B cell (primary cell): ENCODE measurements at regions of chr3 and their contacts with region 1.

Region 1: DNA sequence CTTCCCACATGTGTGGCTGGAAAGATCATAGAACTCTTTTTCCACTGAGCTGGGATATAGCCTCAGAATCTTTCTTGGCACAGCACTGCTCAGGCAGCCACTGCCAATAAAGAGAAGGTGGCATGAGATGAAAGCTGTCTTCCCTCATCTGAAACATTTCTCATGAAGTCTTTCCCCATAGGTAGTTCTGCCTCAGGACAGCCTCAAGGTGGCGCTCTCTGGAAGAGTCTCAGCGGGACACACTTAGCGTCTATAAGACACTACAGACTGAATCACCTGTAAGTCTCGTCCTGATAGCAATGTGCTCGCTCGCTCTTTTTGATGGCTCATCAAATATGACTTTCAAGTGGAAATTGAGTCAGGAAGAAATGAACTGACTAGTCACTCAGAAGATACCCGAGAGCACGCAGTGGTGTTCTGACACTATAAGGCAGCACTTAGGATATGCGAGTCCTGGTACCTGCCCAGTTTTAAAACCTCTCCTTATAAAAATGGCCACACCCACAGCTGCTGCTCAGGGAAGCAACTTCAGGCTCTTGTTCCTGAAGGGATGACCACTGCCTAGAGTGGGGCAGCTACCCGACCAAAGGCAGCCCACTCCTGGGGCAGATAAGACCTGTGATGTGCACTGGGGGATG is 269.5 kb downstream of the SUCLG2 start:
- DNase-seq: peak; percentile 29
- ATAC-seq: no peak
- H3K4me3 ChIP-seq: no peak overlapping the region
- H3K4me3 Mint-ChIP-seq: no peak overlapping the region
- H3K27ac ChIP-seq: no peak overlapping the region
- H3K27ac Mint-ChIP-seq: no peak overlapping the region
- H3K4me1 ChIP-seq: peaks cover 2% of the 10 kb centered on the region in 2 donors
- H3K4me1 Mint-ChIP-seq: peaks cover 7% of the 10 kb centered on the region
- H3K27me3 ChIP-seq: no peaks in the 10 kb centered on the region
- H3K27me3 Mint-ChIP-seq: no peaks in the 10 kb centered on the region
- CTCF ChIP-seq: peak; percentile 57

Region 2: DNA sequence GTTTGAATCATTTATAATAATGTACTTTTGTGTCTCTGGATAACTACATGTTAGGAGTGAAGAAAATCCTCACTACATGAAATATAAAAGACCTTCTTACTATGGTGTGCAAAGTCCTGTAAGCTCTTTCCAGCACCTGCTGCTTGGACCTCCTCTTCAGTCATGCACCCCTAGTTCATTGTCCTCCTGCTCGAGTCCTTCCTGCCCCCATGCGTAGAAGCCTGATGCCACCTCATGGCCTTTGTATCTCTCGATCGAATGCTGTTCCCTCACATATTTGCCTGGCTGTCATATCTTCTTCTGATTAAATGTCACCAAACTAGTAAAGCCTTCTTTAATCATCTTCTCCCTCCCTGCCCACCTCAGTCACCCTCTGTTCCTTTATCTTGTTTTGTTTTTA is 319.4 kb after region 1 on chr3:
- CTCF ChIA-PET with region 1: interaction called, 5 read pairs
- POLR2A ChIA-PET with region 1: no interaction called
- intact Hi-C with region 1: loop called (anchors 5 kb)
- DNase-seq: peak; percentile 30
- ATAC-seq: no peak
- H3K4me3 ChIP-seq: no peak overlapping the region
- H3K4me3 Mint-ChIP-seq: no peak overlapping the region
- H3K27ac ChIP-seq: no peak overlapping the region
- H3K27ac Mint-ChIP-seq: no peak overlapping the region
- H3K4me1 ChIP-seq: peaks cover 6% of the 10 kb centered on the region in 2 donors
- H3K4me1 Mint-ChIP-seq: peaks cover 8% of the 10 kb centered on the region
- H3K27me3 ChIP-seq: no peaks in the 10 kb centered on the region
- H3K27me3 Mint-ChIP-seq: no peaks in the 10 kb centered on the region
- CTCF ChIP-seq: no peak

Region 3: GRCh38 chr3:67790043-67790442 is 405.2 kb after region 1 on chr3:
- CTCF ChIA-PET with region 1: interaction called, 92 read pairs
- POLR2A ChIA-PET with region 1: no interaction called
- intact Hi-C with region 1: loop called (anchors 1 kb)
- DNase-seq: peak; percentile 60
- ATAC-seq: peak; percentile 58
- H3K4me3 ChIP-seq: no peak overlapping the region
- H3K4me3 Mint-ChIP-seq: no peak overlapping the region
- H3K27ac ChIP-seq: no peak overlapping the region
- H3K27ac Mint-ChIP-seq: no peak overlapping the region
- H3K4me1 ChIP-seq: no peaks in the 10 kb centered on the region
- H3K4me1 Mint-ChIP-seq: no peaks in the 10 kb centered on the region
- H3K27me3 ChIP-seq: no peaks in the 10 kb centered on the region
- H3K27me3 Mint-ChIP-seq: peaks cover 6% of the 10 kb centered on the region
- CTCF ChIP-seq: peak; percentile 73

Region 4: GRCh38 chr3:68017067-68017466 is 632.2 kb after region 1 on chr3:
- CTCF ChIA-PET with region 1: no interaction called
- POLR2A ChIA-PET with region 1: no interaction called
- intact Hi-C with region 1: loop called (anchors 10 kb)
- DNase-seq: no peak
- ATAC-seq: no peak
- H3K4me3 ChIP-seq: no peak overlapping the region
- H3K4me3 Mint-ChIP-seq: no peak overlapping the region
- H3K27ac ChIP-seq: no peak overlapping the region
- H3K27ac Mint-ChIP-seq: no peak overlapping the region
- H3K4me1 ChIP-seq: no peaks in the 10 kb centered on the region
- H3K4me1 Mint-ChIP-seq: no peaks in the 10 kb centered on the region
- H3K27me3 ChIP-seq: no peaks in the 10 kb centered on the region
- H3K27me3 Mint-ChIP-seq: no peaks in the 10 kb centered on the region
- CTCF ChIP-seq: no peak

Region 5: GRCh38 chr3:68876112-68876713 is 1491.3 kb after region 1 on chr3:
- CTCF ChIA-PET with region 1: interaction called, 6 read pairs
- POLR2A ChIA-PET with region 1: no interaction called
- intact Hi-C with region 1: loop called (anchors 1 kb)
- DNase-seq: peak; percentile 65
- ATAC-seq: peak; percentile 51
- H3K4me3 ChIP-seq: no peak overlapping the region
- H3K4me3 Mint-ChIP-seq: no peak overlapping the region
- H3K27ac ChIP-seq: no peak overlapping the region
- H3K27ac Mint-ChIP-seq: no peak overlapping the region
- H3K4me1 ChIP-seq: no peaks in the 10 kb centered on the region
- H3K4me1 Mint-ChIP-seq: no peaks in the 10 kb centered on the region
- H3K27me3 ChIP-seq: no peaks in the 10 kb centered on the region
- H3K27me3 Mint-ChIP-seq: peaks cover 35% of the 10 kb centered on the region
- CTCF ChIP-seq: peak; percentile 98